ENCODE measurements at regions of chr7 and their contacts with region 1.

Region 1: GRCh38 chr7:66204822-66205740 is at the start of gene TPST1:
- DNase-seq: peak; percentile 61 to 90 (median 75)
- ATAC-seq: peak; percentile 89
- H3K4me3 ChIP-seq: peak within 1 kb of the TSS; percentile 59 to 84
- H3K4me3 Mint-ChIP-seq: peak within 1 kb of the TSS; percentile 89
- H3K27ac ChIP-seq: peak within 1 kb of the TSS in 1 of 2 experiments; percentile 54
- H3K27ac Mint-ChIP-seq: peak within 1 kb of the TSS; percentile 66
- H3K4me1 ChIP-seq: peaks cover 35% of the 10 kb centered on the region
- H3K4me1 Mint-ChIP-seq: peaks cover 42% of the 10 kb centered on the region
- H3K27me3 ChIP-seq: peaks cover 0 to 3% of the 10 kb centered on the region in 2 experiments
- H3K27me3 Mint-ChIP-seq: peaks cover 6% of the 10 kb centered on the region
- CTCF ChIP-seq: peak; percentile 48
- total RNA-seq, gene TPST1: 4.3 to 6.6 TPM

Region 2: GRCh38 chr7:66055321-66055956 is 149.6 kb before region 1 on chr7:
- CTCF ChIA-PET with region 1: no interaction called
- POLR2A ChIA-PET with region 1: no interaction called
- intact Hi-C with region 1: no loop called
- DNase-seq: no peak
- ATAC-seq: no peak
- H3K4me3 ChIP-seq: no peak overlapping the region
- H3K4me3 Mint-ChIP-seq: no peak overlapping the region
- H3K27ac ChIP-seq: no peak overlapping the region
- H3K27ac Mint-ChIP-seq: no peak overlapping the region
- H3K4me1 ChIP-seq: no peaks in the 10 kb centered on the region
- H3K4me1 Mint-ChIP-seq: peaks cover 3% of the 10 kb centered on the region
- H3K27me3 ChIP-seq: no peaks in the 10 kb centered on the region
- H3K27me3 Mint-ChIP-seq: no peaks in the 10 kb centered on the region
- CTCF ChIP-seq: no peak

Region 3: GRCh38 chr7:66125052-66125708 is 79.9 kb before region 1 on chr7:
- CTCF ChIA-PET with region 1: no interaction called
- POLR2A ChIA-PET with region 1: no interaction called
- intact Hi-C with region 1: loop called in 1 of 2 experiments (anchors 5 kb)
- DNase-seq: peak in 2 of 9 experiments; percentile 24 to 34
- ATAC-seq: peak; percentile 59
- H3K4me3 ChIP-seq: no peak overlapping the region
- H3K4me3 Mint-ChIP-seq: no peak overlapping the region
- H3K27ac ChIP-seq: peak overlapping the region; percentile 4 to 59
- H3K27ac Mint-ChIP-seq: peak overlapping the region; percentile 53
- H3K4me1 ChIP-seq: peaks cover 17% of the 10 kb centered on the region
- H3K4me1 Mint-ChIP-seq: peaks cover 60% of the 10 kb centered on the region
- H3K27me3 ChIP-seq: no peaks in the 10 kb centered on the region
- H3K27me3 Mint-ChIP-seq: no peaks in the 10 kb centered on the region
- CTCF ChIP-seq: no peak

Measured in CD8-positive, alpha-beta T cell (primary cell).